ENCODE measurements at regions of chr22 and their contacts with region 1.

Region 1: GRCh38 chr22:24128631-24129262 is 52.5 kb upstream of the SUSD2 start:
- DNase-seq: no peak
- H3K4me3 ChIP-seq: no peak overlapping the region
- H3K27ac ChIP-seq: no peak overlapping the region
- H3K4me1 ChIP-seq: no peaks in the 10 kb centered on the region
- H3K27me3 ChIP-seq: no peaks in the 10 kb centered on the region
- CTCF ChIP-seq: no peak

Region 2: GRCh38 chr22:23574371-23574811 is 554.4 kb before region 1 on chr22:
- intact Hi-C with region 1: no loop called
- DNase-seq: no peak
- H3K4me3 ChIP-seq: no peak overlapping the region
- H3K27ac ChIP-seq: no peak overlapping the region
- H3K4me1 ChIP-seq: no peaks in the 10 kb centered on the region
- H3K27me3 ChIP-seq: no peaks in the 10 kb centered on the region
- CTCF ChIP-seq: no peak

Region 3: GRCh38 chr22:24043958-24044357 is 84.8 kb before region 1 on chr22:
- intact Hi-C with region 1: loop called (anchors 10 kb)
- DNase-seq: no peak
- H3K4me3 ChIP-seq: no peak overlapping the region
- H3K27ac ChIP-seq: no peak overlapping the region
- H3K4me1 ChIP-seq: no peaks in the 10 kb centered on the region
- H3K27me3 ChIP-seq: no peaks in the 10 kb centered on the region
- CTCF ChIP-seq: no peak

Region 4: DNA sequence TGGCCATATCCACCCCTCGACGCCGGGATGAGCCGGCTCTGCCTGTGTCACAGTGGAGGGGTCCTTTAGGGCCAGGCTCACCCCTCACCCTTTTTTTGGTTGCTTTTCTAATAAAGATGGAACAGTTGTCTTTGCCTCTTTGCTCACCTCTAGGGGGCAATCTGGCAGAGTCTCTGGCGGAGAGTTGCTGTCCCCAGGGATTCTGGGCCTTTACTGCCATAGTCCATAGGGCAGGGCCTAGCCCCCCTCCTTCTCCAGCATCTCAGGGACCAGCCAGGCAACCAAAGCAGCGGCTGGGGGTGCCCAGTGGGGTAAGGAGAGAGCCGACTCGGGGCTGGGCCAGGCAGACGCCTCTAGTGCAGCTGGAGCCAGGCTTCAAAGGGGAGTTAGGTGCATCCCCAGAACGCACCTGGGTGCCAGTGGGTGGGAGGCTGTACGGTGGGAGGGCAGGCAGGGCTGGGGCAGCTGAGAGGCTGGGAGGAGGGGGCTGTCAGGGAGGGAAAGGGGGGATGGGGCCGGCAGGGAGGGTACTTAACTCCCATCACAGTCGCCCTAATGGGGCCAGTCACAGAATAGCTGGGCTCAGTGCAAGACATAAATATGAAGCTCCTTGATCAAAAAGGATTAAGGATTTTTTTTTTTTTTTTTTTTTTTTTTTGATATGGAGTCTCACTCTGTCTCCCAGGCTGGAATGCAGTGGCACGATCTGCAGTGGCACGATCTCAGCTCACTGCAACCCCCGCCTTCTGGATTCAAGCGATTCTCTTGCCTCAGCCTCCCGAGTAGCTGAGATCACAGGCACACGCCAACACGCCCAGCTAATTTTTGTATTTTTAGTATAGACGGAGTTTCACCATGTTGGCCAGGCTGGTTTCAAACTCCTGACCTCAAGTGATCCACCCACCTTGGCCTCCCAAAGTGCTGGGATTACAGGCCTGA is 50.0 kb after region 1 on chr22:
- intact Hi-C with region 1: no loop called
- DNase-seq: no peak
- H3K4me3 ChIP-seq: no peak overlapping the region
- H3K27ac ChIP-seq: no peak overlapping the region
- H3K4me1 ChIP-seq: peaks cover 11% of the 10 kb centered on the region
- H3K27me3 ChIP-seq: no peaks in the 10 kb centered on the region
- CTCF ChIP-seq: no peak